ENCODE measurements at regions of chr1 and their contacts with region 1.

Region 1: DNA sequence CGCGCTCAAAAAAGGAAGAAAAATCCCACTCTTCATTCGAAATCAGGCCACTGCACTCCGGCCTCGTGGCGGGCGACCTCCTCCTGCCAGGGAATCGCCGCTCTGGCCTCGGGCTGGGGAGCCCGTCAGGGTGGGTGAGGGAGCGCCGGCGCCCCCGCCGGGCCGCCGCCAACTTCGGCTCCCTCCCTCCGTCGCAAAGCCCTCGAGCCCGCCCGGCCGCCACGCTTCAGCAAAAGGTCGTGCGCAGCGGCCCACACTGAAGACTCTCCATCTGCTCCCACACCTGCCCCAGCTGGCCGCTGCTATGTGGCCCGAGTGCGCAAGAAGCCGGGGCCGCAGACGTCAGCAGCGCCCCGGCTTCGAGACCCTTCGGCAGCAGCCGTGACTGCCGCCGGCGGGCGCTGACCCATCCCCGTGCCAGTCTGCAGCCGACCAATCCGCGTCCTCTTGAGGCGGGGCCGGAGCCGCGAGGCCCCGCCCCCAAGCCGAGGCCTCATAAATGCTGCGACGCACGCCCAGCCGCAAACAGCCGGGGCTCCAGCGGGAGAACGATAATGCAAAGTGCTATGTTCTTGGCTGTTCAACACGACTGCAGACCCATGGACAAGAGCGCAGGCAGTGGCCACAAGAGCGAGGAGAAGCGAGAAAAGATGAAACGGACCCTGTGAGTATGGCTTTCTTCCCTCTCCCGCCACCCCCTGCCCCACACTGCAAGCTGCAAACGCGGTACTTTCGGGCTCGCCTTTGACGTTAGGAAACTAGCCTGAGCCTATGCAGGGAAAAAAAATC is at the start of gene RGS2:
- DNase-seq: peak; percentile 79 to 95 (median 86)
- ATAC-seq: peak; percentile 87
- H3K4me3 ChIP-seq: peak within 1 kb of the TSS; percentile 65
- H3K4me3 Mint-ChIP-seq: peak within 1 kb of the TSS; percentile 99
- H3K27ac ChIP-seq: peak within 1 kb of the TSS; percentile 33 to 76
- H3K27ac Mint-ChIP-seq: peak within 1 kb of the TSS; percentile 96
- H3K4me1 ChIP-seq: peaks cover 13% of the 10 kb centered on the region
- H3K4me1 Mint-ChIP-seq: peaks cover 36% of the 10 kb centered on the region
- H3K27me3 ChIP-seq: no peaks in the 10 kb centered on the region
- H3K27me3 Mint-ChIP-seq: no peaks in the 10 kb centered on the region
- CTCF ChIP-seq: peak; percentile 23
- total RNA-seq, gene RGS2: 142 to 155 TPM

Region 2: DNA sequence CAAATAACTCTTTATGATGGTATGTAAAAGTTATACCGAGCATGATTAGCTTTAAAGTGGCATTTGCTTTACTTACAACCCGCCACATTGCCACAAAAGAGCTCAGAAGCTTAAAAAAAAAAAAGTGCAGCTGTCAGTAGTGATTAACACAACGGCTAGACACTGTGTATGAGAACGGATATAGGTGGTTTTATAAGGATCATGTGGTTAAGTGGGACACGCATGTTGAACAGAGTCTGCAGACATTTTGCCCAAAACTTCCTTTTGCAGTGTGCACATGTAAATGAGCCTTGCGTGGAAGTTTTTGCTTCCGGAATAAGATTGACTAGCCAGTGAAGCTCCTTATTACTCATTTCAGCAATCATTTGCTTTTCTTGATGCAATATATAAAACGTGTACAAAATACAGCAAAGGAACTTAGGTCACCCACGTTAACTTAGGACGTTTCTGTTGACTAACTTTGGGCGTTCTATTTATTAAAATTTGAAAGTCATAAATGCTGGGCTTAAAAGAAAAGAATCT is 291.9 kb before region 1 on chr1:
- CTCF ChIA-PET with region 1: interaction called, 4 read pairs
- POLR2A ChIA-PET with region 1: no interaction called
- intact Hi-C with region 1: loop called in 1 of 2 experiments (anchors 1 kb)
- DNase-seq: peak in 13 of 14 experiments; percentile 19 to 95 (median 32)
- ATAC-seq: peak; percentile 91
- H3K4me3 ChIP-seq: peak overlapping the region; percentile 17
- H3K4me3 Mint-ChIP-seq: peak overlapping the region; percentile 73
- H3K27ac ChIP-seq: peak overlapping the region in 1 of 2 donors; percentile 49
- H3K27ac Mint-ChIP-seq: peak overlapping the region; percentile 87
- H3K4me1 ChIP-seq: peaks cover 18% of the 10 kb centered on the region
- H3K4me1 Mint-ChIP-seq: peaks cover 45% of the 10 kb centered on the region
- H3K27me3 ChIP-seq: no peaks in the 10 kb centered on the region
- H3K27me3 Mint-ChIP-seq: no peaks in the 10 kb centered on the region
- CTCF ChIP-seq: no peak

Region 3: DNA sequence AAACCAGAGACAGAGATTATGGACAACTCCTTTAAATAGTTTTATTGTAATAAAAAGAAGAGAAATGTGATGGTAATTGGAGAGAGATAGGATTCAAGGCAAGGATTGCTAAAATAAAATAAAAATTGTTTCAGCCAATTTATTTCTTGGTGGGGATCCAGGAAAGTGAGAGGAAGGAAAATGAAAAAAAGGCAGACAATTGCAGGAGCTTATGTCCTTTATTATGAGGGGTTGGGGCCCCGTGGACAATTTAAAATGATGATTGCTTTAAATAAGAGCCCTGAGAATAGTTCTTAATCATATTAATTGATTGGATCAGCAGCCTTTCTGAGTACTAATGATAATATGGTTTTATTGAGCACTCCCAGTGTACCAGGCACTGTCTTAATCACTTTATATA is 40.3 kb after region 1 on chr1:
- CTCF ChIA-PET with region 1: no interaction called
- POLR2A ChIA-PET with region 1: no interaction called
- intact Hi-C with region 1: no loop called
- DNase-seq: no peak
- ATAC-seq: no peak
- H3K4me3 ChIP-seq: no peak overlapping the region
- H3K4me3 Mint-ChIP-seq: no peak overlapping the region
- H3K27ac ChIP-seq: no peak overlapping the region
- H3K27ac Mint-ChIP-seq: no peak overlapping the region
- H3K4me1 ChIP-seq: no peaks in the 10 kb centered on the region
- H3K4me1 Mint-ChIP-seq: no peaks in the 10 kb centered on the region
- H3K27me3 ChIP-seq: no peaks in the 10 kb centered on the region
- H3K27me3 Mint-ChIP-seq: no peaks in the 10 kb centered on the region
- CTCF ChIP-seq: no peak

Region 4: GRCh38 chr1:193019442-193020026 is 210.8 kb after region 1 on chr1:
- CTCF ChIA-PET with region 1: interaction called, 22 read pairs
- POLR2A ChIA-PET with region 1: interaction called, 11 read pairs
- intact Hi-C with region 1: loop called (anchors 1 to 2 kb)
- DNase-seq: peak in 3 of 14 experiments; percentile 60 to 65 (median 63)
- ATAC-seq: no peak
- H3K4me3 ChIP-seq: no peak overlapping the region
- H3K4me3 Mint-ChIP-seq: no peak overlapping the region
- H3K27ac ChIP-seq: no peak overlapping the region
- H3K27ac Mint-ChIP-seq: no peak overlapping the region
- H3K4me1 ChIP-seq: no peaks in the 10 kb centered on the region
- H3K4me1 Mint-ChIP-seq: no peaks in the 10 kb centered on the region
- H3K27me3 ChIP-seq: no peaks in the 10 kb centered on the region
- H3K27me3 Mint-ChIP-seq: no peaks in the 10 kb centered on the region
- CTCF ChIP-seq: peak; percentile 68

Region 5: DNA sequence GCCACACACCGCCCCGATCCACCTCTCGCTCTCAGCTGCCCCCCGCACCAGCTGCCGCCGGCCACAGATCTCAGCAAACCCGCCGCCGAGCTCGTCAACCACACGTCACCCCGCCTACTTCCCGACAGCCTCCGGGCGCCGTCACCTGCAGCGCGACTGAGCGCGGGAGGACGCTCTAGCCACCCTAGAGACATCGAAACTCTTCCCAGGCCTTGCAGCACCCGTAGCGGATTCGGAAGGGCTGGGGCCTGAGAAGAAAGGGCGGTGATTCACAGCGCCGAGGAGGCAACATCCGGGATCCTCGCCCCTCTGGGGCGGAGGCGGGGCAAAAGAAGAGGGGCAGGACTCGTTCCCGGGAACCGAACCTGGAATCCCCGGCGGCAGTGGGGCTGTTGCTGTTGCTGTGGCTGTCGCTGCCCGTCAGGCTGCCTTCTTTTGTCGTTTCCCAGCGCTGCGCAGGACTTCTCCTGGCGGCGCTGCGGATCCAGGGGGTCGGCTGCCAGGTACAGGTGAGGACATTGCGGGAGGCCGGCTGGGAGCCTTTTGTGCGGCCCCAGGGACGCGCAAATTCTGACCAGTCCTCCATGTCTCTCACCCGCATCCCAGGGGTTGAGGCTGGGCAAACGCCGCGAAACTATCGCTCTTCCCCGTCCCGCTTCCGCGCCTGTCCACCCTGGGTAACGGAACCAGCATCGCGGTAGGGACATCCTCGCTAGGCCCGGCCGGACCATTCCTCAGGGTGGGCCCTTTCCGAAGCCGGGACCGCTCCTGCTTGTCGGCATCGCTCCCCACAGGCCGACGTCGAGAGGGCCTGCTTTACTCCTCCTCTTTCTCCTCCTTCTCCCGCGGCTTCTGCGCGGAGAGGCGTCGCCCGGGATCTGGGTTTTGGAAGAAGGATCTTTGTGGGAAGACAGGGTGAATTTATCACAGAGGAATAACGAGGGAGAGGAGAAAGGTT is 250.8 kb after region 1 on chr1 and contains the starts of genes RO60 and UCHL5:
- CTCF ChIA-PET with region 1: interaction called, 9 read pairs
- POLR2A ChIA-PET with region 1: interaction called, 41 read pairs
- intact Hi-C with region 1: no loop called
- DNase-seq: peak; percentile 87 to 99 (median 92)
- ATAC-seq: peak; percentile 96
- H3K4me3 ChIP-seq: peak within 1 kb of the TSS; percentile 95
- H3K4me3 Mint-ChIP-seq: peak within 1 kb of the TSS; percentile 100
- H3K27ac ChIP-seq: peak within 1 kb of the TSS; percentile 83
- H3K27ac Mint-ChIP-seq: peak within 1 kb of the TSS; percentile 96
- H3K4me1 ChIP-seq: peaks cover 24% of the 10 kb centered on the region
- H3K4me1 Mint-ChIP-seq: peaks cover 78% of the 10 kb centered on the region
- H3K27me3 ChIP-seq: no peaks in the 10 kb centered on the region
- H3K27me3 Mint-ChIP-seq: no peaks in the 10 kb centered on the region
- CTCF ChIP-seq: no peak
- total RNA-seq, gene RO60: 46.1 to 46.3 TPM
- total RNA-seq, gene UCHL5: 16.4 to 19.2 TPM

Region 6: GRCh38 chr1:194295685-194296084 is 1487.0 kb after region 1 on chr1:
- CTCF ChIA-PET with region 1: no interaction called
- POLR2A ChIA-PET with region 1: no interaction called
- intact Hi-C with region 1: loop called (anchors 5 kb)
- DNase-seq: peak in 8 of 14 experiments; percentile 7 to 85 (median 30)
- ATAC-seq: peak; percentile 99
- H3K4me3 ChIP-seq: no peak overlapping the region
- H3K4me3 Mint-ChIP-seq: no peak overlapping the region
- H3K27ac ChIP-seq: no peak overlapping the region
- H3K27ac Mint-ChIP-seq: peak overlapping the region; percentile 13
- H3K4me1 ChIP-seq: peaks cover 4% of the 10 kb centered on the region
- H3K4me1 Mint-ChIP-seq: peaks cover 23% of the 10 kb centered on the region
- H3K27me3 ChIP-seq: no peaks in the 10 kb centered on the region
- H3K27me3 Mint-ChIP-seq: no peaks in the 10 kb centered on the region
- CTCF ChIP-seq: peak; percentile 92

Measured in CD4-positive, alpha-beta T cell (primary cell).